ENCODE measurements at regions of chr20 and their contacts with region 1.

Region 1: DNA sequence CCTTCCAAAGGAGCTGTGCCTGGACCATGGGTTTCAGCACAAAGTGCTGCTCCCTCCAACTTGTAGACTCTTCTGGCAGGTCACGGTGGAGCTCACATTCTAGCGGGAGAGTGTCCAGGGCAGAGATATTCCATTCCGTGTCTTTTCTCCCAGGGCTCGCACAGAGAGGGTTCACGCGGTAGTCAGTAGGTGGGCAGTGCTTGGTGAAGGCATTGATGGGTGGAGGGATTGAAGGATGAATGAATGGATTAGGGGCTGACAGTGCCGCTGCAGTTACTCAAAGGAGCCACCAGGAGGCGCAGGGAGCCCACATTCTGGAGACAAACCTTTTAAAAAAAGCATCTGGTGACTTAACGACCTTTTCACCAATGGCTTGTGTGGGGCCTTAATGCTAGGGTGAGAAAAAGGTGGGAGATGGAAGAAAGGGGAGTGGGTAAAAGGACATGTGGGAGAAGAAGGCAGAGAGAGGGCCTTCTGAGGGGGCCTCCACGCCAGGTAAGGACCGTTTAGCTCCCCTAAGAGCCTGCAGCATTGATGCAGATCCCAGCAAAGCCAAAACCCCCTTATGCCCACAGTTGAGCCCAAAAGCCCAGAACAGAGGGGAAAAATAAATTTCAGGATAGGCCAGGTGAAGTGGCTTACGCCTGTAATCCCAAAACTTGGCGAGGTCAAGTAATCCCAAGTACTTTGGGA is 17.5 kb upstream of the FAM110A start:
- DNase-seq: peak; percentile 23
- H3K4me3 ChIP-seq: no peak overlapping the region
- H3K27ac ChIP-seq: no peak overlapping the region
- H3K4me1 ChIP-seq: no peaks in the 10 kb centered on the region
- H3K27me3 ChIP-seq: no peaks in the 10 kb centered on the region
- CTCF ChIP-seq: peak; percentile 94 to 96

Region 2: DNA sequence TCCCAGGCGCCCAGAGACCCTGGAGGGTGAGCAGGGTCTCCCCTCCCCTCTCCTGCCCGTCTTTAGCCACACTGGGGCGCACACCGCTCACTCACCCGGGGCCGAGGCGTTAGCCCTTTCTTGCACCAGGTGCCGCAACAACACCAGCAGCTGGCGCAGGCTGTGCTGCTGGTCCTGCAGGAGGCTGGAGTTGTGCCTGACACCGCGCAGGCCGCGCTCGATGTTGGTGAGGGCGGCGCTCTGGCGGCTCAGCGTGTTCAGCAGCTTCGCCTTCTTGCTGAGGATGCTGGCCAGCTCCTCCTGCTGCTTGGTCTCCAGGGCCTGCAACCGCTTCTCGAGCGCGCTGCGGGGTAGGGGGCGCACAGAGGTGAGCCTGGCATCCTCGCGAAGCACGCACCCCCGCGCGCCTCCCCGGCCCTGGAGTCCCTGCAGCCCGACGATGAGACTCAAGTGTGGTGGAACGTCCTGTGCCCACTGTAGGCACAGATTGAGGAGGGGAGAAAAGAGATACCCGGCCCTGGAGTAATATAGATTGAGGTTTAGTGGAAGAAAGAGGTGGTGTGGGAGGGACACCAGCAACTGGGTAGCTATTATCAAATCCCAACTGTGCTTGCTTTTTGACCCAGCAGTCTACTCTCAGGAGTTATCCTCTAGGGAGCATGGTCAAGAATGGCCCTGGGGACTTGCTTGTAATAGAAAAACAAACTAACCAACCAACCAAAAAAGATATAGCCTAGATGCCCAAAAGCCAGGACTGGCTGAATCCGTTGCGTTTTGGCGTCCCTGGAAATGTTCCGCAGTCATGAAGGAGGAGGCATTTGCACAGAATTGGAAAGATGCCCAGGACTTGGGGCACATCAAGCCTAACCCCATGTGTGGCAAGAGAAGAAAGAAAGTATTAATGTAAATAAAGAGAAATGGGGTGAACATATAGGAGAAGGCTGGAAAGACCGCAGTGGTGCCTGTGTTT is 69.2 kb after region 1 on chr20:
- CTCF ChIA-PET with region 1: interaction called, 16 read pairs
- dilution Hi-C with region 1: no loop called
- in situ Hi-C with region 1: no loop called
- intact Hi-C with region 1: loop called (anchors 5 kb)
- DNase-seq: peak; percentile 16
- H3K4me3 ChIP-seq: no peak overlapping the region
- H3K27ac ChIP-seq: no peak overlapping the region
- H3K4me1 ChIP-seq: peaks cover 17% of the 10 kb centered on the region
- H3K27me3 ChIP-seq: no peaks in the 10 kb centered on the region
- CTCF ChIP-seq: peak in 1 of 2 donors; percentile 23

Region 3: DNA sequence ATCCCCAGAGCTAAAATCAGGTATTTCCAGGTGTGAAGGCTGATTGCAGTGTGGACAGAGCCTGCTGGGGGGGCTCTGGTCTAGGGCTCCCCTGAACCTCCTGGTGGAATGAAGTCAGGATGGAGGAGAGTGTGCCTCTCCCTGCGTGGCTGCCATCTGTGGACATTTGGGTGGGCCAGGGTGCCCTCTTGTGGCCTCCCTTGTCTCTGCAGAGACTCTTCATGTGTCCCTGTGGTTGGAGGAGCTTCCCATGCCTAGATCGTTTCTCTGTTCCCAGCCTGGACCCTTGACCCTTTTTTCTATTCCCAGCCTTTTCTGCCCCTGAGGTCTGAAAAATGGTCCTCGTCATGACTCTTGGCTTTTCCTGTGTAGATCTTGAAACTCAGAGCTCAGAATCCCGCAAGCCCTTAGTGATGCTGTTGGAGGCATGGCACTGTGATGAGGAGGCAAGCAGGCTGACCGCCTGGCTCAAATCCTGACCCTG is 292.4 kb after region 1 on chr20:
- CTCF ChIA-PET with region 1: no interaction called
- dilution Hi-C with region 1: no loop called
- in situ Hi-C with region 1: loop called in 1 of 2 experiments (anchors 10 kb)
- intact Hi-C with region 1: loop called (anchors 1 kb)
- DNase-seq: peak; percentile 24
- H3K4me3 ChIP-seq: no peak overlapping the region
- H3K27ac ChIP-seq: no peak overlapping the region
- H3K4me1 ChIP-seq: no peaks in the 10 kb centered on the region
- H3K27me3 ChIP-seq: no peaks in the 10 kb centered on the region
- CTCF ChIP-seq: peak; percentile 78 to 84

Region 4: GRCh38 chr20:1185790-1186334 is 369.8 kb after region 1 on chr20:
- CTCF ChIA-PET with region 1: no interaction called
- dilution Hi-C with region 1: no loop called
- in situ Hi-C with region 1: no loop called
- intact Hi-C with region 1: loop called (anchors 10 kb)
- DNase-seq: peak; percentile 16
- H3K4me3 ChIP-seq: peak overlapping the region in 1 of 3 experiments; percentile 48
- H3K27ac ChIP-seq: no peak overlapping the region
- H3K4me1 ChIP-seq: no peaks in the 10 kb centered on the region
- H3K27me3 ChIP-seq: peaks cover 12% of the 10 kb centered on the region
- CTCF ChIP-seq: peak; percentile 48 to 71

Region 5: GRCh38 chr20:1212607-1213396 is 396.7 kb after region 1 on chr20:
- CTCF ChIA-PET with region 1: no interaction called
- dilution Hi-C with region 1: no loop called
- in situ Hi-C with region 1: loop called in 1 of 2 experiments (anchors 10 kb)
- intact Hi-C with region 1: loop called (anchors 1 kb)
- DNase-seq: peak; percentile 65
- H3K4me3 ChIP-seq: no peak overlapping the region
- H3K27ac ChIP-seq: no peak overlapping the region
- H3K4me1 ChIP-seq: no peaks in the 10 kb centered on the region
- H3K27me3 ChIP-seq: peaks cover 1% of the 10 kb centered on the region
- CTCF ChIP-seq: peak; percentile 86